ENCODE measurements at regions of chr14 and their contacts with region 1.

Region 1: GRCh38 chr14:52876311-52876710 is 74.5 kb downstream of the FERMT2 start:
- DNase-seq: peak; percentile 77
- ATAC-seq: peak; percentile 66
- H3K4me3 ChIP-seq: no peak overlapping the region
- H3K27ac ChIP-seq: peak overlapping the region; percentile 60; the same call in 1 of the 2 replicates
- H3K4me1 ChIP-seq: peaks cover 16% of the 10 kb centered on the region
- H3K27me3 ChIP-seq: no peaks in the 10 kb centered on the region
- CTCF ChIP-seq: no peak
- POLR2A ChIP-seq: no peak
- RAD21 ChIP-seq: no peak

Region 2: GRCh38 chr14:52840916-52841315 is 35.4 kb before region 1 on chr14:
- CTCF ChIA-PET with region 1: no interaction called
- POLR2A ChIA-PET with region 1: interaction called, 7 read pairs
- dilution Hi-C with region 1: no loop called
- in situ Hi-C with region 1: no loop called
- intact Hi-C with region 1: loop called (anchors 1 kb)
- DNase-seq: peak; percentile 71
- ATAC-seq: peak; percentile 92
- H3K4me3 ChIP-seq: no peak overlapping the region
- H3K27ac ChIP-seq: no peak overlapping the region
- H3K4me1 ChIP-seq: peaks cover 2% of the 10 kb centered on the region; the same call in 1 of the 2 replicates
- H3K27me3 ChIP-seq: no peaks in the 10 kb centered on the region
- CTCF ChIP-seq: no peak
- POLR2A ChIP-seq: no peak
- RAD21 ChIP-seq: no peak

Region 3: GRCh38 chr14:52923902-52924575 is 47.7 kb after region 1 on chr14:
- CTCF ChIA-PET with region 1: no interaction called
- POLR2A ChIA-PET with region 1: no interaction called
- dilution Hi-C with region 1: no loop called
- in situ Hi-C with region 1: no loop called
- intact Hi-C with region 1: loop called (anchors 5 kb)
- DNase-seq: no peak
- ATAC-seq: no peak
- H3K4me3 ChIP-seq: no peak overlapping the region
- H3K27ac ChIP-seq: no peak overlapping the region
- H3K4me1 ChIP-seq: peaks cover 38% of the 10 kb centered on the region
- H3K27me3 ChIP-seq: no peaks in the 10 kb centered on the region
- CTCF ChIP-seq: peak; percentile 15; the same call in 1 of the 2 replicates
- POLR2A ChIP-seq: no peak
- RAD21 ChIP-seq: no peak; the same call in 1 of the 2 replicates

Measured in IMR-90 (cell line).